OCI-LY7 (cell line): ENCODE measurements at regions of chr10 and their contacts with region 1.

Region 1: GRCh38 chr10:110803830-110804338 is 67.8 kb upstream of the PDCD4 start:
- DNase-seq: peak; percentile 74
- H3K4me3 ChIP-seq: peak overlapping the region; percentile 42
- H3K27ac ChIP-seq: peak overlapping the region; percentile 41
- H3K4me1 ChIP-seq: peaks cover 41% of the 10 kb centered on the region
- CTCF ChIP-seq: peak; percentile 96

Region 2: GRCh38 chr10:110252151-110252550 is 551.7 kb before region 1 on chr10:
- CTCF ChIA-PET with region 1: no interaction called
- POLR2A ChIA-PET with region 1: no interaction called
- intact Hi-C with region 1: no loop called
- DNase-seq: no peak
- H3K4me3 ChIP-seq: no peak overlapping the region
- H3K27ac ChIP-seq: no peak overlapping the region
- H3K4me1 ChIP-seq: no peaks in the 10 kb centered on the region
- CTCF ChIP-seq: no peak

Region 3: DNA sequence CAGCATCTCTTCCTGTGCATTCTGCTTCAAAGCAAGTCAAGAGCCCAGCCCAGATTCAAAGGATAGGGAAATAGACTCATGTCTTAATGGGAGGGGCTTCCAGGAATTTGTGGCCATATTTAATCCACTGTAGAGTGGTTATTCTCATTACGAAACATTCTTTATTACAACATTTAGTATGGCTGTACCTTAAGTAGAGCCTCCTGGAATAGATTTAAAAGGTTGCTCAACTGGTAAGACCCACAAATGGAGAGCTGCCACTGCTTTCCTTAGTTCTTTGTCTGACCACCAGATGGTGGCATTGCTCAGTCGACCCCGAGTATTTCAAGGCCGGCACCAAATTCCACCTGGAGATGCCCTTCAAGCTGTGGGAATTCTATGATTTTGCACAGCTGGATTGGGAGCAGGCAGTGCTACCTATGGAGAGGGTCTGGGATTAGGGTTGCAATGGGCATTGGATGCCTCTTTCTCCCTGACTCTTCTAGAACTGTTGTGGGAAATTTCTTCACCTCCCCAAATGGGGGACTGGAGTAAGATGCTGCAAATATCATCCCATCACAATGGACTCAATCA is 57.5 kb before region 1 on chr10:
- CTCF ChIA-PET with region 1: interaction called, 3 read pairs
- POLR2A ChIA-PET with region 1: interaction called, 3 read pairs
- intact Hi-C with region 1: loop called (anchors 2 kb)
- DNase-seq: peak; percentile 71
- H3K4me3 ChIP-seq: no peak overlapping the region
- H3K27ac ChIP-seq: no peak overlapping the region
- H3K4me1 ChIP-seq: peaks cover 58% of the 10 kb centered on the region
- CTCF ChIP-seq: peak; percentile 99

Region 4: DNA sequence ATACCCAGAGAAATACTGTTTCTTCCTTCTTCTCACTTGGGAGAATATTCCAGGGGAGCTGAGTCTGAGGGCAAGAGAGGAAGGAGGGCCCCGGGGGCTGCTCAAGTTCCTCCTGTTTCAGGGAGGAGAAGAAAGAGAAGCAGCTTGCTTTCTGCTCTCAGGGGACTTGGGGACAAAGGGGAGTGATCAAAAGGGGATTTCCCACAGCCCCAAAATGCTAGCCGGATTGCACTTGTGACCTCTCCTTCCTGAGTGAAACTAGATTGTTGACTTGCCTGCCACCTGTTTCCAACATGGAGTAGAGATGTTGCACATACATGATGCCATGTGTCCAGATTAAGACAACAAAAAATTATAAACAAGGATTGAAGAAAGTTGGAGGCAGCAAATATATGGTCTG is 39.1 kb after region 1 on chr10:
- CTCF ChIA-PET with region 1: interaction called, 4 read pairs
- POLR2A ChIA-PET with region 1: interaction called, 31 read pairs
- intact Hi-C with region 1: loop called (anchors 1 kb)
- DNase-seq: peak; percentile 98
- H3K4me3 ChIP-seq: peak overlapping the region; percentile 63
- H3K27ac ChIP-seq: peak overlapping the region; percentile 97
- H3K4me1 ChIP-seq: peaks cover 96% of the 10 kb centered on the region
- CTCF ChIP-seq: no peak

Region 5: GRCh38 chr10:110864662-110865140 is 60.8 kb after region 1 on chr10:
- CTCF ChIA-PET with region 1: interaction called, 4 read pairs
- POLR2A ChIA-PET with region 1: interaction called, 27 read pairs
- intact Hi-C with region 1: no loop called
- DNase-seq: peak; percentile 89
- H3K4me3 ChIP-seq: peak overlapping the region; percentile 60
- H3K27ac ChIP-seq: peak overlapping the region; percentile 92
- H3K4me1 ChIP-seq: peaks cover 100% of the 10 kb centered on the region
- CTCF ChIP-seq: no peak

Region 6: GRCh38 chr10:110893559-110894179 is 89.8 kb after region 1 on chr10:
- CTCF ChIA-PET with region 1: interaction called, 11 read pairs
- POLR2A ChIA-PET with region 1: interaction called, 19 read pairs
- intact Hi-C with region 1: loop called (anchors 1 kb)
- DNase-seq: peak; percentile 85
- H3K4me3 ChIP-seq: no peak overlapping the region
- H3K27ac ChIP-seq: no peak overlapping the region
- H3K4me1 ChIP-seq: peaks cover 4% of the 10 kb centered on the region
- CTCF ChIP-seq: peak; percentile 92